B cell (primary cell): ENCODE measurements at regions of chr11 and their contacts with region 1.

Region 1: DNA sequence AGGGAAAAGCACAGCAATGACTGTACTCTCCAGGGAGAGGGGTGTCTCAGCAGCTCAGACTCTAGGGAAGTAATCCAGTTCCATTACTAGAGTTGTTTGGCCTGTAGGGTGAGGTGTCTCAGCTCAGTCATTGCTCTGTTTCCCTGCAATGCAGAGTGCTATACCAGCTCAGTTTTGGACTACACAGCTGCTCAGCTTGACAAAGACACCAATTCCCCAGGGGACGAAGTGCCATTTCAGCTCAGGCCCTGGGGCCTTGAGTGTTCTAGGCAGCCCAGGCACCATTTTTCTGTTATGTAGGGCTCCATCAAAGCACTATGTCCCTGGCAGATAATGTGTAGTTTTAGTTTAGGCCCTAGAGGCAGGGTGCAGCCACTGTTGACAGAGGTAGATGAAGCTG is 18.2 kb downstream of the CALCB start:
- DNase-seq: no peak
- ATAC-seq: no peak
- H3K4me3 ChIP-seq: no peak overlapping the region
- H3K4me3 Mint-ChIP-seq: no peak overlapping the region
- H3K27ac ChIP-seq: no peak overlapping the region
- H3K27ac Mint-ChIP-seq: peak overlapping the region; percentile 43
- H3K4me1 ChIP-seq: peaks cover 3 to 14% of the 10 kb centered on the region in 2 donors
- H3K4me1 Mint-ChIP-seq: peaks cover 6% of the 10 kb centered on the region
- H3K27me3 ChIP-seq: peaks cover 0 to 5% (median 1%) of the 10 kb centered on the region in 4 experiments
- H3K27me3 Mint-ChIP-seq: peaks cover 32% of the 10 kb centered on the region
- CTCF ChIP-seq: no peak

Region 2: DNA sequence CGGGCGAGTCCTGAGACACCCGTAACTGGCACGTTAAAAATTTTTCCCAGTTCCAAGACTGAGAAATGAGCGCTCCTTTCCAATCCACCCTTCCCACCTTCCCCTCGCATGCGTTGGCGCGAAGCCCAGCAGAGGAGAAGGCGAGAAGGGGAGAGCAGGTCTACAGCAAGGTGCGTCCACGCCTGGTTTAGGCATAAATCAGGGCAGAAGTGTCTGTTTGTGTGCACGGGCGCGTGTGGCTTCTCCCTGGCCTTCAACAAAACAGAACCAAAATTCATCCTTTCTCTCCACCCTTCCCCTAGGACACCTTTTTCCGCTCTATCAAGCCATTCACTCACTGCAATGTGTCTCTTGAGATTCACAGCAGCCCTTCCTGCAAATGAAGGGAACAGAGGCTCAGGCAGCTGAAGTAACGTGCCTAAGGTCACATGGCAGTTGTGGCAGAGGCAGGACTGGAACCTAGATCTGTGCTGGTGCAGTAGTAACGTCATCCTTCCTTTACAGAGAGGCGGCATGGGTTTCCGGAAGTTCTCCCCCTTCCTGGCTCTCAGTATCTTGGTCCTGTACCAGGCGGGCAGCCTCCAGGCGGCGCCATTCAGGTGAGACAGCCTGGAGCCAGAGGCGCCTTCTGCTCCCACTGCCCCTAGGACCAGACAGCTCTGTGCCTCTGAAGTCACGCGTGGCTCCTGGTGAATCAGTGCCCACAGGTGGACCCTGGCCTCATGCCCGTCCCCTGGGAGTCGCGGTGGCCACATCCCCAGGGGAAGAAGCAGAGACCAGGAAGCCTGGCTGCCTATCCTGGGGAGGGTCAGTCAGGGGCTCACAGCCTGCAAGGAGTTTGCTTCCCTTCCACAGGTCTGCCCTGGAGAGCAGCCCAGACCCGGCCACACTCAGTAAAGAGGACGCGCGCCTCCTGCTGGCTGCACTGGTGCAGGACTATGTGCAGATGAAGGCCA is 17.1 kb before region 1 on chr11:
- CTCF ChIA-PET with region 1: interaction called, 11 read pairs
- POLR2A ChIA-PET with region 1: no interaction called
- intact Hi-C with region 1: no loop called
- DNase-seq: peak; percentile 78
- ATAC-seq: peak; percentile 82
- H3K4me3 ChIP-seq: peak overlapping the region in 4 of 5 experiments; percentile 20 to 51 (median 28)
- H3K4me3 Mint-ChIP-seq: peak overlapping the region; percentile 75
- H3K27ac ChIP-seq: no peak overlapping the region
- H3K27ac Mint-ChIP-seq: peak overlapping the region; percentile 41
- H3K4me1 ChIP-seq: peaks cover 19% of the 10 kb centered on the region in 2 donors
- H3K4me1 Mint-ChIP-seq: peaks cover 17% of the 10 kb centered on the region
- H3K27me3 ChIP-seq: peaks cover 0 to 52% (median 16%) of the 10 kb centered on the region in 4 experiments
- H3K27me3 Mint-ChIP-seq: peaks cover 60% of the 10 kb centered on the region
- CTCF ChIP-seq: peak; percentile 75

Region 3: DNA sequence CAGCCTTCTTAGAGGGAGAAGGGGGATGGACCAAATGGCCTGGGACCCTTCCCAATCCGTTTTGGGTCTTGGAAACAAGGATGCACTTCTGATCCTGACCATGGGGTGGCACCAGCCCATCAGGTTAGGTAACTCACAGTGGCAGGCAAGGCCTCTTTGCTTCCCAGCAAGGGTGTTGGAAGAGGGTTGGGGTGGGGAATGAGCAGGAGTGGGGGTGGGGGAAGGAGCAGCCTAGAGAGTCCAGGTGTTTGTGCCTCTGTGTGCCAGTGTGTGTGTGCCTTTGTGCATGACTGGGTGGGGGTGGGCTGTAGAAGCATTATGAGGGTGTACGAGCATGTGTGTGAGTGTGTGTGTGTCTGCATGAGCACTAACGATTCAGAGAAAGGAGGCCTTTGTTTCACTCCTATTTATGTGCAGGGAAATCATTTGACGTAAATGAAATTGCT is 236.2 kb after region 1 on chr11:
- CTCF ChIA-PET with region 1: no interaction called
- POLR2A ChIA-PET with region 1: no interaction called
- intact Hi-C with region 1: no loop called
- DNase-seq: no peak
- ATAC-seq: no peak
- H3K4me3 ChIP-seq: no peak overlapping the region
- H3K4me3 Mint-ChIP-seq: no peak overlapping the region
- H3K27ac ChIP-seq: no peak overlapping the region
- H3K27ac Mint-ChIP-seq: no peak overlapping the region
- H3K4me1 ChIP-seq: no peaks in the 10 kb centered on the region
- H3K4me1 Mint-ChIP-seq: no peaks in the 10 kb centered on the region
- H3K27me3 ChIP-seq: peaks cover 0 to 2% (median 0%) of the 10 kb centered on the region in 4 experiments
- H3K27me3 Mint-ChIP-seq: peaks cover 12% of the 10 kb centered on the region
- CTCF ChIP-seq: no peak